ENCODE measurements at regions of chr12 and their contacts with region 1.

Region 1: DNA sequence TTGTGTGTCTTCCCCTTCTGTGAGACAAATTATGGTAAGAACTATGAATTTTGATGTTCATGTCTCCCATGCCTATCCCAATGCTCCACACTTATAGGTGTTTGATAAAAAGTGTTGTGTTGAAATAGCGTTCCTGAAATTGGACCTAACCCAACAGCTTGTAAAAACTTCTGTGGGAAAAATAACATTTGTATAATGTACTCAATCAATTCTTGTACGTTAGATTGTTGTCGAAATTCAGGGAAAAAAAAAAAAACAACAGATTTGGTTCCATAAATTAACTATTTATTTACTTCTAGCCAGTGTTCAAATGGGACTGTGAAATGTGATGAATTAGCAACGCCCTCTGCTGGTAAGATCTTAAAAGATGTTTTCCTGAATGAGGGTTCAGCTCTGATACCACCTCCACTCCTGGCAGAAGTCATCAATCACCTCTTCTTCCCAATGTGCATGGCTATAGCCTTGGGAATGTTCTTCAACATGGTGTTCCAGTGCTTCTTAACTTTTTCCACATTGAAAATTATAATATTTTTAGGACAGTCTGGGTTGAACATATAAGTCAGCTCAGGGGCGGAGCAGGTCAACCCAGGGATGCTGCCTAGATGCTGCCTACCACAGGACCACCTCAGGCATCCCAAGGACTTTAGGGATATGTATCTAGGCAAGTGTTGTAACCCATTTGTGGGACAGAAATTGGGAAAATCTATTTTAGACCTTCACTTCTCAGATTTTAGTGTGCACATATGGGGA is 170.6 kb downstream of the OTOGL start:
- DNase-seq: no peak
- H3K4me3 ChIP-seq: no peak overlapping the region
- CTCF ChIP-seq: peak; percentile 56

Region 2: DNA sequence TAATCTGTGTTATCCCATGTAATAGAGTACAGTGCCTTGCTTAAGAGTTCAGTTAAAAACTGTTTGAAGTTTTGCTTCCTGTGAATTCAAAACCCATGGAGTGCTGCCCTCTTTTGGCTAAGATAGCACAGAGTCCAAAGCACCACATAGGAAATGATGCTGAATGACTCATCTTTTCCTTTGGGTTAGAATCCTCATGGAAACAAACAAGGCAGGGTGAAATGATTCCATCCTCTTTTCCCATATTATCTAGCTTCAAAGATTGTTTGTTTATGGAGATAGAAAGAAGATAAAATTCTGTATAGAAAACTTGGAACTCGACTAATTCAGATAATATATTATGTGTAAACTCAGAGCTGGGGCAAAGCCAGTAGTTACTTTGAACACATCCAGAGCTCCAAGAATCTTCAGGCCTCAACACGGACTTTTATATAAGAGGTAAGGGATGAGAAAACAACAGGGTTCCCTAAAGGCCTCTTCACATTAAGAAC is 83.2 kb before region 1 on chr12:
- CTCF ChIA-PET with region 1: interaction called, 403 read pairs
- POLR2A ChIA-PET with region 1: no interaction called
- DNase-seq: peak; percentile 70
- H3K4me3 ChIP-seq: no peak overlapping the region
- CTCF ChIP-seq: peak; percentile 70

Region 3: GRCh38 chr12:80232837-80233236 is 37.1 kb before region 1 on chr12:
- CTCF ChIA-PET with region 1: interaction called, 18 read pairs
- POLR2A ChIA-PET with region 1: no interaction called
- DNase-seq: no peak
- H3K4me3 ChIP-seq: no peak overlapping the region
- CTCF ChIP-seq: no peak

Region 4: DNA sequence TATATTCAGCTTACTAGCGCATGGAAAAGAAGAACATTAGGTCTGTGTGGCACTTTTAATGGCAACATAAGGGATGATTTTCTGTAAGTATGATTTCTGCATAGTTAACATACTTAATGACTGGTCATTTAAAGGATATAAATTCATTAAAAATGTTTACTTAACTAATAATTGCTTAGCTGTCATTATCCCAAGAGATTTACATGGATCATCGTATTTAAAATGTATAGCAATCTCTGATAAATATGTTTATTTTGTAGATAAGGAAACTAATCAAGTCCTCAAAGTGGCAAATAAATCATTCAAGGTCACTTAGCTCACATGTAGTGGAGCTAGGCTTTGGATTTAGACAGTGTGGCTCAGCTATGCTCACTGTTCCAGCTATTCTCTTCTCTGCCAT is 12.1 kb before region 1 on chr12:
- CTCF ChIA-PET with region 1: interaction called, 30 read pairs
- POLR2A ChIA-PET with region 1: no interaction called
- DNase-seq: no peak
- H3K4me3 ChIP-seq: no peak overlapping the region
- CTCF ChIP-seq: no peak

Region 5: GRCh38 chr12:80332827-80333226 is 62.8 kb after region 1 on chr12:
- CTCF ChIA-PET with region 1: no interaction called
- POLR2A ChIA-PET with region 1: no interaction called
- DNase-seq: no peak
- H3K4me3 ChIP-seq: no peak overlapping the region
- CTCF ChIP-seq: no peak

Measured in AG04449 (cell line).